A549 (cell line): ENCODE measurements at regions of chr17 and their contacts with region 1.

Region 1: DNA sequence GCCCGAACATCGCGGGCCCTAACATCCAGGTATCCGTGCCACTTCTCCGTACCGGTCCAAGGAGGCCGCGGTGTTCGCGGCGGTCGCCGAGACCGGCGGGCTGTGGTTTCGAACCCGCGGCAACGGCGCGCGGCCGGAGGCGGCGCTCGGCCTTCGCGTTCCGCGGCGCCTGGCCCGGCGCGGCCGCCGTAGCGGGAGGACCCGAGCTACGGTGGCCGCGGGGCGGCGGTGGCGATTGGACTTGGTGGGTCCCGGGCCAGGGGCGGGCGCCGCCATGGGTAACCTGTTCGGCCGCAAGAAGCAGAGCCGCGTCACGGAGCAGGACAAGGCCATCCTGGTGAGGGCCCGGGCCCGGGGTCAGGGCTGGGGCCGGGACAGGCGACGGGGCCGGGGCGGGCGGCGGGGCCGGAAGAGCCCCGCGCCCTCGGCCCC is at the start of gene CHMP6:
- DNase-seq: peak; percentile 85 to 87
- ATAC-seq: peak; percentile 42 to 51
- H3K4me3 ChIP-seq: peak within 1 kb of the TSS; percentile 92
- H3K27ac ChIP-seq: peak within 1 kb of the TSS; percentile 89 to 95
- H3K4me1 ChIP-seq: peaks cover 20% of the 10 kb centered on the region
- CTCF ChIP-seq: peak; percentile 13; the same call in 1 of the 3 replicates
- EP300 ChIP-seq: no peak
- POLR2A ChIP-seq: peak; percentile 29; the same call in 1 of the 2 replicates
- RAD21 ChIP-seq: no peak
- polyA plus RNA-seq, gene CHMP6: 17.8 and 28.9 TPM in 2 replicates

Region 2: DNA sequence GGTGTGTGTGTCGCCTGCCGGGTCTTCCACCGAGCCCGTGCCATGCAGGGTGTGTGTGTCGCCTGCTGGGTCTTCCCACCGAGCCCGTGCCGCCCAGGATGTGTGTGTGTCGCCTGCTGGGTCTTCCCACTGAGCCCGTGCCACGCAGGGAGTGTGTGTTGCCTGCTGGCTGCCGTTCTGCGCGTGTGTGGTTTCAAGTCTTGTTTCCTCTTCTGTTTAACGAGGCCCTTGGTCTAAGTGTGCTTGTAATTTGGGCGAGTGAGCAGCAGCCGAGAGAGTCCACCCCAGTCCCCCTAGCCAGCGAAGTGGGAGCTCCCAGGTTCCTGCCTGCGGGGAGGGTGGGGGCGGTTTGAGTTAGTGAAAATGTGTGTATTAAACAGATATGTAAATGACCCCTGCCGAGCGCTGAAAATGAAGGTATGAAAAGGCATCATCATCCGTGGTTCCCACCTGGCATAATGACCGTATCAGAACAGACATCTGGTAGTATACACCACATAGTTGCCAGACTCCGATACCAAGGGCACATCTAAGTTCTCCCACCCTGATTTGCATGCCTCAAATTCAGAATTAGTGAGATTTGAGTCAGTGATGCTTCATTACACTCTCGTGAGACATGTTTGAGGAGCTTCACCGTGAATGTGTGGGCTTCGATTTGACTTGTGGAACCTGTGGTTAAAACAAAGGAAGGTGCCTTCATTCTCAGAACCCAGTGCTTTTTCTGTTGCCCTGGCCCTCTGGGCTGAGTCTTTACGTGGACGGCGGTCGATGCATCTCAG is 114.5 kb before region 1 on chr17:
- CTCF ChIA-PET with region 1: no interaction called
- POLR2A ChIA-PET with region 1: no interaction called
- DNase-seq: no peak
- ATAC-seq: no peak
- H3K4me3 ChIP-seq: no peak overlapping the region
- H3K27ac ChIP-seq: no peak overlapping the region
- H3K4me1 ChIP-seq: peaks cover 12% of the 10 kb centered on the region
- CTCF ChIP-seq: no peak
- EP300 ChIP-seq: no peak
- POLR2A ChIP-seq: no peak
- RAD21 ChIP-seq: no peak

Region 3: GRCh38 chr17:81002409-81003361 is 11.0 kb after region 1 on chr17:
- CTCF ChIA-PET with region 1: interaction called, 13 read pairs
- POLR2A ChIA-PET with region 1: interaction called, 3 read pairs
- DNase-seq: no peak
- ATAC-seq: peak; percentile 15 to 26; a peak in 4 of 6 replicates
- H3K4me3 ChIP-seq: no peak overlapping the region
- H3K27ac ChIP-seq: peak overlapping the region in 1 of 2 experiments; percentile 18; a peak in 1 of 6 replicates
- H3K4me1 ChIP-seq: peaks cover 20% of the 10 kb centered on the region
- CTCF ChIP-seq: no peak
- EP300 ChIP-seq: no peak
- POLR2A ChIP-seq: no peak
- RAD21 ChIP-seq: no peak